Common myeloid progenitor, CD34-positive (primary cell): ENCODE measurements at regions of chr5 and their contacts with region 1.

Region 1: GRCh38 chr5:150143350-150144245 is 12.0 kb downstream of the PDGFRB start:
- DNase-seq: no peak
- H3K4me3 ChIP-seq: no peak overlapping the region
- H3K27ac ChIP-seq: no peak overlapping the region
- H3K4me1 ChIP-seq: peaks cover 0 to 32% (median 12%) of the 10 kb centered on the region in 4 experiments
- H3K27me3 ChIP-seq: no peaks in the 10 kb centered on the region

Region 2: DNA sequence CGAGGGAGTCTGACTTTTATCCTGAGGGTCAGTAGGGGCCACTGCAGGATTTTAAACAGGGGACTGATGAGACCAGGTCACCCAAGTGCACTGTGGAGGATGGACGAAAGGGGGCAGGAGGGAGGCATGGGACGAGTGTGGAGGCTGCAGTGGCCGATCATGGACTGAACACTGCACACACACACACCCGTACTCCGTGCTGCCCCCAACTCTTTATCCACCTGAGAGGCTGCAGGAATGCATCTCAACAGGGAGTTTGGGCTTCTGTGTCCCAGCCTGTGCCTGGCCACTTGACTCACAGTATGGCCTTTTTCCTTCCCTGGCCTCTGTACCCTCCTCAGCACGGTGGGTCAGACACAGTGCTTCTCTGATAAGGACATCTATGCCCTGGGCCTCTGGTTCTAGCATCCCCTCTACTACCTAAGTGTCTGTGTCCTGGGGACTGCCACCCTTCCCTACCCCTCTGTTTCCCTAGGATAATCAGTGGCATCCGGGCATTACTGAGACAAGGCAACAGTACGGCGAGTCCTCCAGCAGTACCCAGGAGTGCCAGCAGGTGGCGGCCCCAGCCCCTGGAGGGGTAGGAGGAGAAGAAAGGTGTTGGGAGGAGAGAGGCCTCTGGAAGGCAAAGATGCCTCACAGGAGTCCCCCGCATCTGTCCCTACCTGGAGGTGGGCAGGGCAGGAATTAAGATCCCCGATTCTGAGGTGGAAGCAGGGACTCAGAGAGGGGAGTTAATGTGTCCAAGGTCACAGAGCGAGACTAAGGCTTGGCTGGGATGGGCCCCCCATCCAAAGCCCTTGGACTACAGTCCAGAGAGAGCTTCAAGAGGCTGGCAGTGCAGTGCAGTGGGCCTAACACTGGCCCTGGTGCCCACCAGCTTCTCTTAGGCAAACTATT is 17.9 kb after region 1 on chr5:
- CTCF ChIA-PET with region 1: interaction called, 11 read pairs
- POLR2A ChIA-PET with region 1: no interaction called
- DNase-seq: peak; percentile 48 to 69 (median 54)
- H3K4me3 ChIP-seq: no peak overlapping the region
- H3K27ac ChIP-seq: no peak overlapping the region
- H3K4me1 ChIP-seq: peaks cover 0 to 24% (median 4%) of the 10 kb centered on the region in 4 experiments
- H3K27me3 ChIP-seq: peaks cover 3 to 14% (median 8%) of the 10 kb centered on the region in 5 experiments